Left lung (tissue), 14 donors: ENCODE measurements at regions of chr9 and their contacts with region 1.

Region 1: GRCh38 chr9:89602978-89603766 is 1.6 kb upstream of the GADD45G start:
- DNase-seq: peak; percentile 83 to 97 (median 92)
- ATAC-seq: peak; percentile 53
- H3K4me3 ChIP-seq: peak overlapping the region; percentile 61 to 76
- H3K27ac ChIP-seq: peak overlapping the region; percentile 23 to 94
- H3K4me1 ChIP-seq: peaks cover 21 to 48% of the 10 kb centered on the region in 2 donors
- H3K27me3 ChIP-seq: peaks cover 0 to 16% of the 10 kb centered on the region in 2 donors
- CTCF ChIP-seq: peak; percentile 75 to 86

Region 2: GRCh38 chr9:89654859-89655689 is 51.9 kb after region 1 on chr9:
- intact Hi-C with region 1: no loop called
- DNase-seq: peak in 1 of 4 donors; percentile 78
- ATAC-seq: no peak
- H3K4me3 ChIP-seq: no peak overlapping the region
- H3K27ac ChIP-seq: peak overlapping the region in 1 of 2 donors; percentile 71
- H3K4me1 ChIP-seq: peaks cover 0 to 50% of the 10 kb centered on the region in 2 donors
- H3K27me3 ChIP-seq: no peaks in the 10 kb centered on the region
- CTCF ChIP-seq: no peak

Region 3: DNA sequence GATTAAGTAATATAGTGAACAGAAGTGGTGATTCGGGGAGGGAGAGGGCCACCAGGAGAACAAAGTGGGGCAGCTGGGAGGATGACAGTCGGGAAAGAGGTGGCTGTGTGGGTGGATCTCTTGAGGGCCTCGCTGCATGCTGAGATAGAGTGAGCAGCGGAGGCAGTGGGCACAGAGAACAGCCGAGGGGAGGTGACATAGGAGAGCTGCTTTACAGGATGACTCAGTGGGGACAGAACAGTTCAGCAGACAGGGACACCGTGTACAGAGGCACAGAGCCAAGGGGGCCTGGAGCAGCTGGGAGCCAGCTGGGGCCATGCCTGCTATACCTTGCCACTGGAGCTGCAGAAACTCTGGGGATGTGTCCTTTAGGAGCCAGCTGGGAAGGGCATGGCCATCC is 275.5 kb after region 1 on chr9:
- intact Hi-C with region 1: no loop called
- DNase-seq: peak in 2 of 4 donors; percentile 38 to 69
- ATAC-seq: peak; percentile 64
- H3K4me3 ChIP-seq: no peak overlapping the region
- H3K27ac ChIP-seq: no peak overlapping the region
- H3K4me1 ChIP-seq: peaks cover 9 to 18% of the 10 kb centered on the region in 2 donors
- H3K27me3 ChIP-seq: no peaks in the 10 kb centered on the region
- CTCF ChIP-seq: no peak

Region 4: GRCh38 chr9:89923961-89924504 is 320.9 kb after region 1 on chr9:
- intact Hi-C with region 1: loop called in 1 of 2 experiments (anchors 5 kb)
- DNase-seq: no peak
- ATAC-seq: no peak
- H3K4me3 ChIP-seq: no peak overlapping the region
- H3K27ac ChIP-seq: no peak overlapping the region
- H3K4me1 ChIP-seq: peaks cover 0 to 10% of the 10 kb centered on the region in 2 donors
- H3K27me3 ChIP-seq: no peaks in the 10 kb centered on the region
- CTCF ChIP-seq: no peak

Region 5: DNA sequence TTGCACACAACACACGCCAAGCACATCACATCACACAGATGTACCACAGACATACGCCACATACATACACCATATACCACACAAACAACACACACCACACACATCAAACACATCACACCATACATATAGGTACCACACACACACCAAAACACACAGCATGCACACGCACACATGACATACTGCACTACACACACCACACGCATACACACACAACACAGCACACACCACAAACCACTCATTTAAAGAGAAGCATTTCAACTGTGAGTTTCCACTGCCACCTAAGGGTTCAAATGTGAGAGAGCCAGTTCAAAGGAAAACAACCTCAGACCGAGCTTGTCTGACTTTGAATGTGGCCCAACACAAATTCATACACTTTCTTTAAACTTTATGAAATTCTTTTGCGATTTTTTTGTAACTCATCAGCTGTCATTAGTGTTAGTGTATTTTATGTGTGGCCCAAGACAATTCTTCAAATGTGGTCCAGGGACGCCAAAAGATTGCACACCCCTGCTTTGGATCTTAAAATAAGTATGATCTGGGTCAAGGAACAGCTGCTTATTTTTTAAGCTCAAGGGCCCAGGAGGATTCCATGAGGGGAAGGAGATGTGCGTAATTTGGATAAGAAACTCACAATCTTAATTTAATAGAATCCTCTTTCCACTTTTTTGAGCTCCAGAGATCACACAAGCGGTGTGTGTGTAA is 496.2 kb after region 1 on chr9:
- intact Hi-C with region 1: loop called in 1 of 2 experiments (anchors 2 kb)
- DNase-seq: peak in 2 of 4 donors; percentile 22 to 41
- ATAC-seq: peak; percentile 56
- H3K4me3 ChIP-seq: no peak overlapping the region
- H3K27ac ChIP-seq: no peak overlapping the region
- H3K4me1 ChIP-seq: peaks cover 0 to 7% of the 10 kb centered on the region in 2 donors
- H3K27me3 ChIP-seq: peaks cover 0 to 6% of the 10 kb centered on the region in 2 donors
- CTCF ChIP-seq: peak in 1 of 2 donors; percentile 41